Endothelial cell of umbilical vein (primary cell): ENCODE measurements at regions of chr2 and their contacts with region 1.

Region 1: GRCh38 chr2:136423516-136423996 is 305.6 kb upstream of the CXCR4 start:
- DNase-seq: peak; percentile 58
- H3K4me3 ChIP-seq: peak overlapping the region in 1 of 3 experiments; percentile 17
- H3K27ac ChIP-seq: no peak overlapping the region
- H3K4me1 ChIP-seq: no peaks in the 10 kb centered on the region
- H3K27me3 ChIP-seq: peaks cover 5 to 6% of the 10 kb centered on the region in 2 experiments
- CTCF ChIP-seq: peak; percentile 80 to 87
- POLR2A ChIP-seq: no peak

Region 2: DNA sequence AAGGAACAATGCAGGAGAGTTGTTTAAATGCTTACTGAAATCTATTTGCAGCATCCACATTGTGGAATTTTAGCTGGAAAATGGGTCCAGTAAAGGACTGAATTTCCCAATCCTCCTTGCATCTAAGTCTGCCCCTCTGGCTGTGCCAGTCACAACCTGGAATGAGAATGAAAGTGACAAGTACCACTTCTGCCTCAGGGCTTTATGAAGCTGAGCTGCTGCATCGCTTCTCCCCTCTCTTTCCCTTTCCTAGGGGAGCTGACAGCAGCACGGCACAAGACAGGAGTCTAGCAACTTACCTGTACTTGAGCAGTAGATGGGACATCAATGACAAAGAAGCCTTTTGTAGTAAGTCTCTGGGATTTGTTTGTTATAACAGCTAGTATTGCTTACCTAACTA is 314.5 kb after region 1 on chr2:
- CTCF ChIA-PET with region 1: no interaction called
- POLR2A ChIA-PET with region 1: no interaction called
- dilution Hi-C with region 1: no loop called
- intact Hi-C with region 1: loop called (anchors 5 kb)
- DNase-seq: no peak
- H3K4me3 ChIP-seq: no peak overlapping the region
- H3K27ac ChIP-seq: no peak overlapping the region
- H3K4me1 ChIP-seq: no peaks in the 10 kb centered on the region
- H3K27me3 ChIP-seq: no peaks in the 10 kb centered on the region
- CTCF ChIP-seq: no peak
- POLR2A ChIP-seq: no peak

Region 3: GRCh38 chr2:136932700-136933099 is 509.1 kb after region 1 on chr2:
- CTCF ChIA-PET with region 1: no interaction called
- POLR2A ChIA-PET with region 1: no interaction called
- dilution Hi-C with region 1: no loop called
- intact Hi-C with region 1: loop called (anchors 5 kb)
- DNase-seq: peak; percentile 5
- H3K4me3 ChIP-seq: no peak overlapping the region
- H3K27ac ChIP-seq: no peak overlapping the region
- H3K4me1 ChIP-seq: no peaks in the 10 kb centered on the region
- H3K27me3 ChIP-seq: no peaks in the 10 kb centered on the region
- CTCF ChIP-seq: no peak
- POLR2A ChIP-seq: no peak

Region 4: GRCh38 chr2:137050949-137051348 is 627.4 kb after region 1 on chr2:
- CTCF ChIA-PET with region 1: no interaction called
- POLR2A ChIA-PET with region 1: no interaction called
- dilution Hi-C with region 1: no loop called
- intact Hi-C with region 1: loop called (anchors 1 kb)
- DNase-seq: peak; percentile 10
- H3K4me3 ChIP-seq: no peak overlapping the region
- H3K27ac ChIP-seq: no peak overlapping the region
- H3K4me1 ChIP-seq: no peaks in the 10 kb centered on the region
- H3K27me3 ChIP-seq: no peaks in the 10 kb centered on the region
- CTCF ChIP-seq: peak in 1 of 2 donors; percentile 8
- POLR2A ChIP-seq: no peak

Region 5: GRCh38 chr2:137838255-137839092 is 1414.9 kb after region 1 on chr2:
- CTCF ChIA-PET with region 1: interaction called, 13 read pairs
- POLR2A ChIA-PET with region 1: no interaction called
- dilution Hi-C with region 1: no loop called
- intact Hi-C with region 1: loop called (anchors 1 kb)
- DNase-seq: peak; percentile 50
- H3K4me3 ChIP-seq: no peak overlapping the region
- H3K27ac ChIP-seq: no peak overlapping the region
- H3K4me1 ChIP-seq: no peaks in the 10 kb centered on the region
- H3K27me3 ChIP-seq: no peaks in the 10 kb centered on the region
- CTCF ChIP-seq: peak; percentile 18 to 33
- POLR2A ChIP-seq: no peak